HepG2 (cell line): ENCODE measurements at regions of chr10 and their contacts with region 1.

Region 1: DNA sequence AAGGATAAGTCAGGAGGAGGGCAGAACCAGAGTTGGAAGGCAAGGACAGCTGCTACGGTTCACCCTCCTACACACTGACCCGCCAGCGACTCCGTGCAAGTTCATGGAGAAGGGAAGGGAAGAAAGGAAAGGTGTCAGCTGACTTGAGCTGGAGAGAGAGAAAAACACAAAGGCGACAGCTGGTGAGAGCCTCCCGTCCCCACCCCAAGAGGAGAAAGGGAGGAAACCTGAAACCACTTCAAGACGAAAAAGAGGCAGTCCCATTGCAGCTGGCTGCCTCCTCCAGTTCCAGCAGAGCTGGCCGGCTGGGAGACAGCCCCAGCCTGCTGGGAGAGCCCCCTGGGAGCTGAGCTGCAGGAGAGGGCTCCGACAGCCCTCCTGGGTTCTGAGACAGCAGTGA is 75.2 kb downstream of the PARD3 start:
- DNase-seq: no peak
- ATAC-seq: no peak
- H3K4me3 ChIP-seq: no peak overlapping the region
- H3K27ac ChIP-seq: peak overlapping the region; percentile 98
- H3K4me1 ChIP-seq: peaks cover 77% of the 10 kb centered on the region
- H3K27me3 ChIP-seq: no peaks in the 10 kb centered on the region
- CTCF ChIP-seq: no peak
- EP300 ChIP-seq: no peak
- POLR2A ChIP-seq: no peak
- RAD21 ChIP-seq: no peak

Region 2: GRCh38 chr10:34689053-34689452 is 50.9 kb before region 1 on chr10:
- CTCF ChIA-PET with region 1: no interaction called
- POLR2A ChIA-PET with region 1: interaction called, 3 read pairs
- in situ Hi-C with region 1: no loop called
- intact Hi-C with region 1: loop called (anchors 10 kb)
- DNase-seq: no peak
- ATAC-seq: no peak
- H3K4me3 ChIP-seq: no peak overlapping the region
- H3K27ac ChIP-seq: no peak overlapping the region
- H3K4me1 ChIP-seq: no peaks in the 10 kb centered on the region
- H3K27me3 ChIP-seq: no peaks in the 10 kb centered on the region
- CTCF ChIP-seq: no peak
- EP300 ChIP-seq: no peak
- POLR2A ChIP-seq: no peak
- RAD21 ChIP-seq: no peak

Region 3: DNA sequence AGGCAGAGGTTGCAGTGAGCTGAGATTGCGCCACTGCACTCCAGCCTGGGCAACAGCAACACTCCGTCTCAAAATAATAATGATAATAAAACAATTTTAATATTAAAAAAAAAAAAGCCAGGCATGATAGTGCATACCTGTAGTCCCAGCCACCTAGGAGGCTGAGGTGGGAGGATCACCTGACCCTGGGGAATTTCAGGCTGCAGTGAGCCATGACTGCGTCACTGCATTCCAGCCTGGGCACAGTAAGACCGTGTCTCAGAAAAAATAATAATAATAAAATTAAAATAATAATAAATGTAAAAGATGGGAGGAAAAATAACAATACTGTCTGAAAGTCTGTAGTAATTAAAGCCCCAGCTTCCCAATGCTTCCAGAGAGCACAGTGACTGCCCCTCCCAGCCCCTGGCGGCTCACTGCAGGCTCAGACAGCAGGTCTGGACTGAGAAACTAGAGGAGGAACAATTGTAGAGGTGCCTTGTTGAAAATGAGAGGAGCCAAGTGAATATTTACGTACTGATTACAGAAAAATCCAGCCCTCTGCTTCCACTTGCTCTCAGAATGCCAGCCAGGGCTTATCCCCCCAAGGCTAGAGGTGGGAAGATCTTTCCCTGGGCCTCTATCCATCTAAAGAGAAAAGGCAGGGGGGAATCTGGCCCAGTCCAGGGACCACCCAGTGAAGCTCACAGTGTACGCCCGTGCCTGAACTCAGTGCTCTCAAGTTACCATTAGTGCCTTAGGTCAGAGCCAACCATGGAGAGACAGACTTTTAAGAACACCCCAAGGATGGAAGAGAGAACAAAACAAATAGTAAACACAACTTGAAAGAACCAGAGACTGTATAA is 37.6 kb before region 1 on chr10:
- CTCF ChIA-PET with region 1: no interaction called
- POLR2A ChIA-PET with region 1: no interaction called
- in situ Hi-C with region 1: no loop called
- intact Hi-C with region 1: no loop called
- DNase-seq: no peak
- ATAC-seq: peak; percentile 48; the same call in 2 of the 3 replicates
- H3K4me3 ChIP-seq: no peak overlapping the region
- H3K27ac ChIP-seq: no peak overlapping the region
- H3K4me1 ChIP-seq: peaks cover 77% of the 10 kb centered on the region
- H3K27me3 ChIP-seq: no peaks in the 10 kb centered on the region; a peak in 1 of 5 replicates
- CTCF ChIP-seq: no peak
- EP300 ChIP-seq: no peak
- POLR2A ChIP-seq: no peak
- RAD21 ChIP-seq: no peak

Region 4: DNA sequence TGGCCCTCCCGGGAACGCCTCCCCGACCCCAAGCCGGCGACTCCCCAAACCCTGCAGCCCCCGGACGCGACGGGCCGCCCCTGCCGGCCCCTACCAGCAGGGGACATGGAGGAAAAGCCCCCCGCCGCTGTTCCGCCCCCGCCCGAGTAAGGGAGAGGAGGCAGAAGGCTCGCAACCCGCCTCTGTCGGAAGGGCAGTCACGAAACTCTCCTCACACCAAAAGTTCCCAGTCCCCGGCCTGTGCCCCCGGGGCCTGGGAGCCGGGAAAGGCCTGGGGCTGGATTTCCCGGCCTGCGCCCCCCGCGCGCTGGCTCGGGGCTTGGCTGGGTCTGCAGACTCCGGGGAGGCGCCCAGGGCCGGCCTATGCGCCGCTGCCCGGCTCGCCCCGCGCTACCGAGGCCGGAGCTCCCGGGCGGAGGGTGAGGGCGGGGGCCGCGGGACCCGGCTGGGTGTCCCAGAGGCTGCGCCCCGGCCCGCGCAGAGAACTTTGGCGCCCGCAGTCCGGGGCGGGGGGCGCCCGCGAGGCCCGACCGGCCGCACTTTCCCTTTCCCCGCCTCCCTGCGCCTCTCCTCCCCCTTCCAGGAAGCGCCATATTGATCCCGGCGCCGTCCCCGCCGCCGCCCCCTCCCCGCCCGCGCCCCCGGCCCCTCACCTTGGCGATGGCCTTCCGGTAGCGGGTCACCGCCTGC is 74.5 kb after region 1 on chr10:
- CTCF ChIA-PET with region 1: no interaction called
- POLR2A ChIA-PET with region 1: interaction called, 5 read pairs
- in situ Hi-C with region 1: no loop called
- intact Hi-C with region 1: loop called (anchors 5 kb)
- DNase-seq: peak; percentile 51
- ATAC-seq: peak; percentile 68
- H3K4me3 ChIP-seq: peak overlapping the region; percentile 74 to 93 (median 85)
- H3K27ac ChIP-seq: peak overlapping the region; percentile 87
- H3K4me1 ChIP-seq: peaks cover 67% of the 10 kb centered on the region
- H3K27me3 ChIP-seq: no peaks in the 10 kb centered on the region
- CTCF ChIP-seq: peak; percentile 33; the same call in 1 of the 2 replicates
- EP300 ChIP-seq: 0 out of 4 replicates have a peak, but pooled peaks of 1 of the 2 experiments have one; percentile 9
- POLR2A ChIP-seq: peak; percentile 29 to 35; a peak in 3 of 4 replicates
- RAD21 ChIP-seq: peak; percentile 45